Activated naive CD4-positive, alpha-beta T cell treated with anti-CD3 and anti-CD28 coated beads for 36 hours (primary cell): ENCODE measurements at regions of chr12 and their contacts with region 1.

Region 1: GRCh38 chr12:12611512-12612306 is at the start of gene CREBL2:
- DNase-seq: peak; percentile 90
- H3K4me3 Mint-ChIP-seq: peak within 1 kb of the TSS; percentile 88
- H3K27ac Mint-ChIP-seq: peak within 1 kb of the TSS; percentile 99
- H3K4me1 Mint-ChIP-seq: peaks cover 59% of the 10 kb centered on the region
- H3K27me3 Mint-ChIP-seq: no peaks in the 10 kb centered on the region
- total RNA-seq, gene CREBL2: 15.6 to 16.1 TPM

Region 2: GRCh38 chr12:12254553-12254952 is 357.2 kb before region 1 on chr12:
- CTCF ChIA-PET with region 1: no interaction called
- intact Hi-C with region 1: no loop called
- DNase-seq: no peak
- H3K4me3 Mint-ChIP-seq: no peak overlapping the region
- H3K27ac Mint-ChIP-seq: no peak overlapping the region
- H3K4me1 Mint-ChIP-seq: peaks cover 8% of the 10 kb centered on the region
- H3K27me3 Mint-ChIP-seq: no peaks in the 10 kb centered on the region

Region 3: DNA sequence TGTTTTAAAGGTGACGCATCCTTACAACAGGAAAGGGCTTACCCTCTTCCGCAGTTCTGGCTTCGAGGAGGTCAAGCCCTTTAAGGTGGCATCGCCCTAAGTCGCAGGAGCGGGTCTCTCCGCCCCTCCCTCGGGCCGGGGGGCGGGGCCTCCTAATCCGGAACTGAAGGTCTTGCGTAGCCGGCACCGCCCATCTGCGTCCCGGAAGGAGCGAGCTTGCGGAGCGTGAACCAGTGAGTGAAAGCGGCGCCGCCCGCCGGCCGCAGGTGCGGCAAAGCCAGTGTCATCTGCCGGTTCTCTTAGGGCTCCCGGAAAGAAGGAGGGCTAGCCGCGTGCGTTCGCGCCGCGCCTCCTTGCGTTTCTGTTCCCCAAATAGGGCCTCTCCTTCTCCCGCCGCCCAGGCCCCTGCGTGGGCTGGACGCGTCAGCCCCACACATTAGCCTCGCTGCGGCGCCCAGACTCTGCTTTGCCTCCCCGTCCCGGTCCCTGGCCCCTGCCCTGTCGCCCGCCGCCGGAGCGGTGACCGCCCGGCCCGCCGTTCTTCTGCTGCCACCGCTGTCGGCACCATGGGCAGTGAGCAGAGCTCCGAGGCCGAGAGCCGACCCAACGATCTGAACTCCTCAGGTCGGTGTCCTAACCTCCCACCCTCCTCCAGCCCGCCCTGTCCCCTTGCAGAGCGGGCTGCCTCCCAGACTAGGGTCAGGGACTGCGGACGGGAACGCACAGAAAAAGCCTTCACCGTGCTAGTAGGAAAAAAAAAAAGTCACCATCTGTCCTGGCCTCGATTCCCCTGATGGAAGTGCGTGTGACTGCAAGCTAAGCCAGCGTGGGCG is 254.6 kb before region 1 on chr12 and contains the start of gene BORCS5:
- CTCF ChIA-PET with region 1: no interaction called
- intact Hi-C with region 1: loop called (anchors 1 kb)
- DNase-seq: peak; percentile 98
- H3K4me3 Mint-ChIP-seq: peak within 1 kb of the TSS; percentile 81
- H3K27ac Mint-ChIP-seq: peak within 1 kb of the TSS; percentile 90
- H3K4me1 Mint-ChIP-seq: peaks cover 41% of the 10 kb centered on the region
- H3K27me3 Mint-ChIP-seq: no peaks in the 10 kb centered on the region
- total RNA-seq, gene BORCS5: 31.2 to 35.6 TPM

Region 4: GRCh38 chr12:12505544-12506495 is 105.9 kb before region 1 on chr12:
- CTCF ChIA-PET with region 1: interaction called, 4 read pairs
- intact Hi-C with region 1: loop called (anchors 1 kb)
- DNase-seq: peak; percentile 61
- H3K4me3 Mint-ChIP-seq: peak overlapping the region; percentile 25
- H3K27ac Mint-ChIP-seq: peak overlapping the region; percentile 93
- H3K4me1 Mint-ChIP-seq: peaks cover 80% of the 10 kb centered on the region
- H3K27me3 Mint-ChIP-seq: no peaks in the 10 kb centered on the region

Region 5: GRCh38 chr12:12599496-12600254 is 12.0 kb before region 1 on chr12:
- CTCF ChIA-PET with region 1: no interaction called
- intact Hi-C with region 1: no loop called
- DNase-seq: no peak
- H3K4me3 Mint-ChIP-seq: no peak overlapping the region
- H3K27ac Mint-ChIP-seq: no peak overlapping the region
- H3K4me1 Mint-ChIP-seq: no peaks in the 10 kb centered on the region
- H3K27me3 Mint-ChIP-seq: no peaks in the 10 kb centered on the region

Region 6: DNA sequence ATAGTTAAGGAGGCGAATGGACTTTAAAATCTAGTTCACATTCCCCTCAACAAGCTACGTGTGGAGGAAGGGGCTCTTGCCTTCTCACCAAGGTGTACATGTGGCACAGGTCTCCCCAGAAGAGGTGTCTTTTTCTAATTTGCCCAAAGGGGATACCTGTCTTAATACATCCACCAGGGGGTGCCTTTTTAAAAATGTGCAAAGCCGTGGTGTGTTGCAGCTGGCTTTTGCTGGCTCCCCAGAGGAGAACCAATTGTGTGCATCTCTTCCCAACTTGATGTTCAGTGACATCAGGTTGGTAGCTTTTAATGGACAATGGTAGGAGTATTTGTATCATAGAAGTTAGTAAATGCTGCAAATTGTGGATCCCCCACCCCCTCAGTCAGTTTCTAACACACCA is 33.8 kb after region 1 on chr12:
- CTCF ChIA-PET with region 1: interaction called, 8 read pairs
- intact Hi-C with region 1: loop called (anchors 2 kb)
- DNase-seq: peak; percentile 38
- H3K4me3 Mint-ChIP-seq: no peak overlapping the region
- H3K27ac Mint-ChIP-seq: peak overlapping the region; percentile 46
- H3K4me1 Mint-ChIP-seq: peaks cover 14% of the 10 kb centered on the region
- H3K27me3 Mint-ChIP-seq: no peaks in the 10 kb centered on the region

Region 7: DNA sequence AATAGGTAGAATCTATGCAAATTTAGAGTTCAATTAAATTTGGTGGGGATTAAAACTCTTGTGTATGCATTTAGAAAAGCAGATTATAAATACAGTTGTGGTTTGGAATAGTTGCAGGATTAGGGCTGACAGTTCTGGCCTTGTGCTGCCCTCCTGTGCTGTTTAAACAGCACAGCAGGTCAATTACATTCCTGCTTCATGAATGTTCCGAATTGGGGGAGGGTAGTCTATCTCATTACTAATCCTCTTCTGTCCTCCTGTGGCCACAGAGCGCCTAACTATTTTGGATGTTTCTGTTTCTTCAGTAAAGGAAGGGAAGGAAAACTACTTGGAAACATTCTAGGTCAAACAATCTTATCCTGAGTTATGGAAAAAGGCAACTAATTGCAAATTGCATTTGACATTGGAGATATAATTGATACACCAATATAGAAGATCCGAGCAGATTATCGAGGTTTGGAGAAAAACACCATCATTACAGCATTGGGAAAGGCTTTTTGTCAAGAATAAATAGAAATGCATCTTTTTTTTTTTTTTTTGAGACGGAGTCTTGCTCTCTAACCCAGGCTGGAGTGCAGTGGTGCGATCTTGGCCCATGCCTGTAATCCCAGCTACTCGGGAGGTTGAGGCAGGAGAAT is 93.0 kb after region 1 on chr12:
- CTCF ChIA-PET with region 1: no interaction called
- intact Hi-C with region 1: loop called (anchors 2 kb)
- DNase-seq: peak; percentile 60
- H3K4me3 Mint-ChIP-seq: no peak overlapping the region
- H3K27ac Mint-ChIP-seq: no peak overlapping the region
- H3K4me1 Mint-ChIP-seq: peaks cover 23% of the 10 kb centered on the region
- H3K27me3 Mint-ChIP-seq: no peaks in the 10 kb centered on the region

Region 8: GRCh38 chr12:12890815-12891645 is 279.3 kb after region 1 on chr12 and contains the start of gene GPRC5A:
- CTCF ChIA-PET with region 1: no interaction called
- intact Hi-C with region 1: loop called (anchors 10 kb)
- DNase-seq: peak; percentile 68
- H3K4me3 Mint-ChIP-seq: peak within 1 kb of the TSS; percentile 82
- H3K27ac Mint-ChIP-seq: no peak within 1 kb of the TSS
- H3K4me1 Mint-ChIP-seq: peaks cover 16% of the 10 kb centered on the region
- H3K27me3 Mint-ChIP-seq: peaks cover 14% of the 10 kb centered on the region
- total RNA-seq, gene GPRC5A: 0.24 to 0.64 TPM

Region 9: GRCh38 chr12:13071305-13072280 is 459.9 kb after region 1 on chr12:
- CTCF ChIA-PET with region 1: no interaction called
- intact Hi-C with region 1: no loop called
- DNase-seq: no peak
- H3K4me3 Mint-ChIP-seq: no peak overlapping the region
- H3K27ac Mint-ChIP-seq: no peak overlapping the region
- H3K4me1 Mint-ChIP-seq: no peaks in the 10 kb centered on the region
- H3K27me3 Mint-ChIP-seq: no peaks in the 10 kb centered on the region

Region 10: DNA sequence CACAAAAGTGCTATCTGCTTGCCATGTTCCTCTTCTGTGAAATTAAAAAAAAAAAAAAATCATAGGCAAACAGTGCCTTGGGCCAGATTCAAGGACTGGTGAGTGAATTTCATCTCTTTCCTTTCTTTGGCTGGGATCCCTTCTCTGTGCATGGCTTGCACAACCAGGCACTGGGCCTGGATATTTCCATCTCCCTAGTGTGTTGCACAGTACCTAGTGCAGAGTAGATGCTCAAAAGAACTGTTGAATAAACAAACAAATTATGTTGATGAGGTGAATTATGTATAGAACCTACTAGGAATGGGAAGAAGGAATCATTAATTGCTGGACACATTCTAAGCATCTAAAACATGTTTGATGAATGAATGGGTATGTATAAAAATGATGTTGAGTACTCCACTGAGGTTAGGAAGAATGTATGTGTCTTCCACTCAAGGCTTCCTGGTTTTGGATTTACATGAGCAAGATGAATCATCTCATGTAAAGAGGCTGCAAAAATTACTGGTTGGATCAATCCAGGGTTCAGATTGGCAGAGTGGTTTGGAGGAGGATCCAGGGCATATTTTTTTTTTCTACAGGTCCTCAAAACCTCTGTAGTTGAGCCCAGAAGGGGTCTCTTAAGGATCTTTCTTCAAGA is 678.1 kb after region 1 on chr12:
- CTCF ChIA-PET with region 1: no interaction called
- intact Hi-C with region 1: no loop called
- DNase-seq: no peak
- H3K4me3 Mint-ChIP-seq: no peak overlapping the region
- H3K27ac Mint-ChIP-seq: no peak overlapping the region
- H3K4me1 Mint-ChIP-seq: no peaks in the 10 kb centered on the region
- H3K27me3 Mint-ChIP-seq: no peaks in the 10 kb centered on the region